GM10248 (cell line): ENCODE measurements at regions of chr16 and their contacts with region 1.

Region 1: DNA sequence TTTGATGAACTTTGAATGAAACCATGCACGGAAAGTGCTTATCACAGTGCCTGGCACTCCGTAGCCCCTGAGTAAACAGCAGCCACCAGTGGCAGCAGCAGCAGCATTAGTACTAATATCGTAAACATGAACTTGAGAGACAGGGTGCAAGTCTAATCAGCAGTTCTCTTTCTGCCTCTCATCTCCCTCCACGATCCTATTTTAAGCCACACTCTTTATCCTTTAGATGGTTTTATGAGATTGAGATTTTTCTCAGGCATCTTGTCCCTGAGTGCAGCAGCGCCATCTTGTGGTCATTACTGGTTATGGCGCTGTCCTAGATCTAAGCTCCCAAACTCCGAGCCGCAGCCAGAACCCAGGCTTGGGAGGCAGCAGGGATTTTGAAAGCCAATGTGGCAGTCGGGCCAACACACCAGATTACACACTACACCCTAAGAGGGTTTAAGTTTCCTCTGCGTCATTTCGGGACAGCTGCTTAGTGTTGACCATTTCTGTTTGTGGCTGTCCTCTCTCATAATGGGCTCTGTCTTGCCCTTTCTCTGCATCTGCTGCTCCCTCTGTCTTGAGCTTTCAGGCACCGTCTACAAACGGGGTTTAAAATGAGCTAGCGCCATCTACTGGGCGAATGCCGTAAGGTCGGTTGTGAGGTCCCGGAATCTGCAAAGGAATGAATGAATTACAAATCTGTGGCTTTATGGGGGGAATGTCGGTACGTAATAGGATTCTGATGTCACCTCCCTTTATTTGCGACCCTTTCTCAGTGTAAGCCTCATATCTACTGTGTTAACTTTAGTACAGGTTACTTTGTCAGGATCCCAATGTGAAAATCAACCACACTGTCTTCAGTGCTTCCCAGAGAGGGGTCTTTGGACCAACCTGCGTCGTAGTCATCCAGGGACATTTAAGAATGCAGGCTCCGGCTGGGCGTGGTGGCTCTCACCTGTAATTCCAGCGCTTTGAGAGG is 64.5 kb downstream of the CYLD start:
- DNase-seq: peak; percentile 85
- CTCF ChIP-seq: peak; percentile 96

Region 2: GRCh38 chr16:50245417-50246298 is 560.7 kb before region 1 on chr16:
- CTCF ChIA-PET with region 1: interaction called, 11 read pairs
- POLR2A ChIA-PET with region 1: no interaction called
- DNase-seq: peak; percentile 90
- CTCF ChIP-seq: peak; percentile 52

Region 3: DNA sequence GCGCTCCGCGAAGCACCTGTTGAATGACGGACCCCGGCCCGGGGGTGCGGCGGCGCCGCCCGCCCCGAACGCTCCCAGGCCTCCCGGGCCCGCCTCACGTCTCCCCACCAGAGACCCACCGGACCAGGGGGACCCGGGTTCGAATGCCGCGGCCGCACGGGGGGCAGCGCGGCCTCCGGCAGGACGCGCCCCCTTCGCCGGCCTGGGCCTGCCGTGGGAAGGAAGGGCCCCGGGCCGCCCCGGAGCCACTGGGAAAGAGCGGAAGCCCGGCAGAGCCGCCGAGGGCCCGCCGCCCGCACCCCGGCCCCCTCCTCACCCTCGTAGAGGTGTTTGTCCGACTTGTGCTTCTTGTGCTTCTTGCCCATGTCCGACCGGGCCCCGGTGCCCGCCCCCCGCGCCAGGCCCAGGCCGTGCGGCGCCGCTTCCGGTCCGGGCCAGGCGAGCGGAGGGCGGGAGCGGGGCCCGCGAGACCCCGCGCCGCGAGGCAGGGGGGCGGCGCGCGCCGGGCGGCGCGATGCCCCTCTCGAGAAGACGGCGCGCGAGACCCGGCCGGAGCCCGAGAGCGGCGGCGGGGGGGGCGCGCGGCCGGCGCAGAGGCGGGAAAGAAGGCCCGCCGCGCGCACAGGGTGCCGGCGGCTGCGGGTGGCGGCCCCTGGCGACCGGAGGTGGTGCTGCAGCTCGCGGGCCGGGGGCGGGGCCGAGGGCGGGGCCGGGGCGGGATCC is 437.8 kb before region 1 on chr16 and contains the start of gene BRD7:
- CTCF ChIA-PET with region 1: interaction called, 13 read pairs
- POLR2A ChIA-PET with region 1: no interaction called
- DNase-seq: peak; percentile 93
- CTCF ChIP-seq: peak; percentile 69

Region 4: GRCh38 chr16:50588276-50588675 is 218.1 kb before region 1 on chr16:
- CTCF ChIA-PET with region 1: interaction called, 11 read pairs
- POLR2A ChIA-PET with region 1: no interaction called
- DNase-seq: no peak
- CTCF ChIP-seq: no peak

Region 5: DNA sequence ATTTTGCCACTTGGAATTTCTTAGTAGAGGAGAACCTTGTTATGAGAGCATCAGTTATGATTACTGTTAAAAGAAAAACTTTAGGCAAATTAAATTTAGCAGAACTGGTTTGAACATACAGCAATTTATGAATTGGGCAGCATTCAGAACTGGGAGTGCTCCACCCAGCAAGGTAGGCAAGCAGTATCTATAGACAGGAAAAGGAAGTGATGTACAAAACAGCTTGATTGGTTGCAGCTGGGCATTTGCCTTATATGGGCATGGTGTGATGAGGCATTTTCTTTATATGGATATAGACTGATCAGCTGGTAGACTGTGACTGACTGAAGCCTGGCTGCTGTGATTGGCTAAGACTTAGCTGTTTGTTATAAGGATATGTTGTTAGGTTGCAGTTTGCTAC is 82.1 kb before region 1 on chr16:
- CTCF ChIA-PET with region 1: interaction called, 10 read pairs
- POLR2A ChIA-PET with region 1: no interaction called
- DNase-seq: no peak
- CTCF ChIP-seq: no peak

Region 6: DNA sequence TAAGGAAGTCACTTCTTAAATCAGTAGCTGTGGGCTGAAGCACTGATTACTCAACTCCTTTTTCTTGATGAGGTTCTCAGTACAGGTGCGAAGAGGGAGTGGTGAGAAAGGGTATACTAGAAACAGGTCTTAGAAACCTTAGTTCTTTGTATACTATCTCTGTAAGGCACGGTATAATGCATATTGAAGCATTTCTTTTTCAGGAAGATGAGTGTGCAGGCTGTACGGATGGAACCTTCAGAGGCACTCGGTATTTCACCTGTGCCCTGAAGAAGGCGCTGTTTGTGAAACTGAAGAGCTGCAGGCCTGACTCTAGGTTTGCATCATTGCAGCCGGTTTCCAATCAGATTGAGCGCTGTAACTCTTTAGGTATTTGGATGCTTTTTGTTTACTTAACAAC is 25.3 kb before region 1 on chr16:
- CTCF ChIA-PET with region 1: interaction called, 80 read pairs
- POLR2A ChIA-PET with region 1: no interaction called
- DNase-seq: no peak
- CTCF ChIP-seq: no peak

Region 7: DNA sequence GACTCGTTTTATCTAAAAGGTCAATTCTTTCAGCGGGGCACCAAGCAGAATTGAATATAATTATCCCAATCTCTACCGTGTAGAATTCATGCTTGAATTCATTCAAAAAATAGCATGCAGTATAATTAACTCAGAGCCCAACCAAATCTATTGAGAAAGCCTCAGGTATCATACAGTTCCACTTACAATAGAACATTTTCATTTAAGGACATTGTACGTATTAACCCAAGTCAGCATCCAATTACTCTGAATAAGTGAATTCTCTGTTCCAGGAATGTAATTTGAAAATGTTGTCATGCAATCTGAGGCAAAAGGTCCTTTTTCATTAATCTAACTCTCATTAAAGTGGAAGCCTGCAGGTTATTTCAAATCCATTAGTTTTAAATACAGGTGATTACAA is 266.2 kb after region 1 on chr16:
- CTCF ChIA-PET with region 1: no interaction called
- POLR2A ChIA-PET with region 1: no interaction called
- DNase-seq: no peak
- CTCF ChIP-seq: no peak